ENCODE measurements at regions of chr7 and their contacts with region 1.

Region 1: DNA sequence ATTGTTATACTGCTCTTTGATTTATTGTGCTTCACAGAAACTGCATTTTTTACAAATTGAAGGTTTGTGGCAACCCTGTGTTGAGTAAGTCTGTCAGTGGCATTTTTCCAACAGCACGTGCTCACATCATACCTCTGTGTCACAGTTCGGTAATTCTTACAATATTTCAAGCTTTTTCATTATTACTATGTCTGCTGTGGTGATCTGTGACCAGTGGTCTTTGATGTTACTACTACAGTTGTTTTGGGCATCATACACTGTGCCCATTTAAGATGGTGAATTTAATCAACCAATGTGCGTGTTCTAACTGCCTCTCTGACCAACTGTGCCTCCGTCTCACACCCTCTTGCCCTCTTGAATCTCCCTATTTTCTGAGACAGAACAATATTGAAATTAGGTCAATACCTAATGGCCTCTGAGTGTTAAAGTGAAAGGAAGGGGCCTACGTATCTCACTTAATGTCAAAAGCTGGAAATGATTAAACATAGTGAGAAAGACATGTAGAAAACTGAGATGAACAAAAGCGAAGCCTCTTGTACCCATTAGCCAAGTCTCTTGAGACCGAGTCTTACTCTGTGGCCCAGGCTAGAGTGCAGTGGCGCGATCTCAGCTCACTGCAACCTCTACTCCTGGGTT is 20.2 kb upstream of the ASL start:
- DNase-seq: no peak
- ATAC-seq: no peak
- H3K4me3 ChIP-seq: no peak overlapping the region
- H3K27ac ChIP-seq: no peak overlapping the region
- H3K4me1 ChIP-seq: no peaks in the 10 kb centered on the region
- H3K27me3 ChIP-seq: no peaks in the 10 kb centered on the region
- CTCF ChIP-seq: no peak

Region 2: DNA sequence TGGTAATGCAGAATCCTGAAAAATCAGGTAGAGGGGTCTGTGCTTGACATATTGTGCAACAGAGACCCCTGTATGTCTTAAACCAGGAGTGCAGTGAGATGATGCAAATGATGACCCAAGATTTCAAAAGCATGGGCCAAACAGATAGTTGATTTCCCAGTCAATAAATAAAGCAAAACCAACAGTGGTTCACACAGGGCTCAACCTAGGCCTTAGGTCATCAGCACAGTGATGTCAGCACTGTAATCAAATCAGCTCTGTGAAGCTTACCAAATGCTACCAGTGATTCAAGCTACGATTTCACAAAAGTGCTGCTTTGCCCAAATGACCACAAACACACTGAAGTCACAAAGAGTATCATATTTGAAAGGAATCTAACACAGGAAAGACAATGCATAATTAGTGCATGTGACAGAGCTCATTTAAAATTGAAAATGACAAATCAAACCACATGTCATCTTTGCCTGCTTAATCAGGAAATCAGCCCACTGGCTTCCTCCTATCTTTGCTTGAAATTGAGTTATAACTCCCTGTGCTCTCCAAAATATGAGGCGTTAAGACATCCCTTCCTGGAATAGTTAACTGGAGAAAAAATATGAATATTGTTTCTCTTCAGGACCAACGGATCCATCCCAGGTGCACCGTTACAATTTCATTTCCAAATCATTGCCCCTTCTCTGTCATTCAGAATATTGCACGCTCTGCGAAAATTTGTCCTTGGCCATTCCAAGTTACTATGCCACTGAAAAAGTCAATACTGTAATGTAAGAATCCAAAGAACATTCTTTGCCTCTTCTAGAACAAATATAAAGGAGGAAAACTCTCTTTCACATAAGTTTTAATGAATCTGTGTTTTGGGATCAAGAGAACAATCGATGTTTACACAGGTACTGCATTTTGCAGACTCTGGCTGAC is 21.7 kb before region 1 on chr7:
- CTCF ChIA-PET with region 1: no interaction called
- POLR2A ChIA-PET with region 1: no interaction called
- in situ Hi-C with region 1: no loop called
- intact Hi-C with region 1: no loop called
- DNase-seq: no peak
- ATAC-seq: no peak
- H3K4me3 ChIP-seq: no peak overlapping the region
- H3K27ac ChIP-seq: no peak overlapping the region
- H3K4me1 ChIP-seq: no peaks in the 10 kb centered on the region
- H3K27me3 ChIP-seq: no peaks in the 10 kb centered on the region
- CTCF ChIP-seq: no peak

Region 3: GRCh38 chr7:66083677-66084076 is 28.2 kb after region 1 on chr7:
- CTCF ChIA-PET with region 1: interaction called, 12 read pairs
- POLR2A ChIA-PET with region 1: no interaction called
- in situ Hi-C with region 1: no loop called
- intact Hi-C with region 1: no loop called
- DNase-seq: no peak
- ATAC-seq: no peak
- H3K4me3 ChIP-seq: no peak overlapping the region
- H3K27ac ChIP-seq: no peak overlapping the region
- H3K4me1 ChIP-seq: no peaks in the 10 kb centered on the region
- H3K27me3 ChIP-seq: no peaks in the 10 kb centered on the region
- CTCF ChIP-seq: no peak